HepG2 (cell line): ENCODE measurements at regions of chr6 and their contacts with region 1.

Region 1: DNA sequence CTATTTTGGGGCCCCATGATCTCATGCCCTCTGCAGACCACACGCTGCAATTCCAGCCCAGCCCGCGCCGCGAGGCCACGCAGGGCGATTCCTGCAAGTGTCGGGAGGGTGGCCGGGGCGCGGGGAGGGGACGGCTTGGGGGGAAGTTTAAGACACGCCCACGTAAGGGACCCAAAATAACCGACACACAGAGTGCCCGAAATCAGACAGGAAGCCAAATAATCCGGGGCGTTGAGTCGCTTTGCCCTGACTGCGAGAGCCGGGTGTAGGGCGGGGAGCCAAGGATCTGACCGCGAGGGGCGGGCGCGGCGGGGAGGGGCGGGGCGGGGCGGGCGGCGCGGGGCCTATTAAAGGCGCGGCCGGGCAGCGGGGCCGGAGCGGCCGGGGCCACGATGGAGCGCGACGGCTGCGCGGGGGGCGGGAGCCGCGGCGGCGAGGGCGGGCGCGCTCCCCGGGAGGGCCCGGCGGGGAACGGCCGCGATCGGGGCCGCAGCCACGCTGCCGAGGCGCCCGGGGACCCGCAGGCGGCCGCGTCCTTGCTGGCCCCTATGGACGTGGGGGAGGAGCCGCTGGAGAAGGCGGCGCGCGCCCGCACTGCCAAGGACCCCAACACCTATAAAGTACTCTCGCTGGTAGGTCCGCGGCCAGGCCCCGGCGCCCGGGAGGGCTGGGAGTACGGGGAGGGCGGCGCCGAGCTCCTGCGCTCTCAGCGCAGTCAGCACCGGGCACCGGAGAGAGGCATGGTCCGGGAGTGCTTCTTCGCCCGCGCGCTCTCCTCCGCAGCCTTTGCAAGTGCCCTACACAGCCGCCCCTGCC is at the start of gene ENPP1:
- DNase-seq: peak; percentile 71
- ATAC-seq: peak; percentile 93
- H3K4me3 ChIP-seq: peak within 1 kb of the TSS; percentile 71 to 94 (median 91)
- H3K27ac ChIP-seq: peak within 1 kb of the TSS; percentile 70
- H3K4me1 ChIP-seq: peaks cover 72% of the 10 kb centered on the region
- H3K27me3 ChIP-seq: no peaks in the 10 kb centered on the region; a peak in 1 of 5 replicates
- CTCF ChIP-seq: peak; percentile 83
- EP300 ChIP-seq: no peak
- POLR2A ChIP-seq: peak; percentile 43 to 84; a peak in 3 of 4 replicates
- RAD21 ChIP-seq: peak; percentile 71
- total RNA-seq, gene ENPP1: 45.8 and 56.5 TPM in 2 replicates

Region 2: GRCh38 chr6:131565056-131565455 is 242.8 kb before region 1 on chr6:
- CTCF ChIA-PET with region 1: no interaction called
- POLR2A ChIA-PET with region 1: no interaction called
- in situ Hi-C with region 1: no loop called
- intact Hi-C with region 1: no loop called
- DNase-seq: no peak
- ATAC-seq: no peak
- H3K4me3 ChIP-seq: no peak overlapping the region
- H3K27ac ChIP-seq: no peak overlapping the region
- H3K4me1 ChIP-seq: no peaks in the 10 kb centered on the region
- H3K27me3 ChIP-seq: no peaks in the 10 kb centered on the region
- CTCF ChIP-seq: no peak
- EP300 ChIP-seq: no peak
- POLR2A ChIP-seq: no peak
- RAD21 ChIP-seq: no peak

Region 3: DNA sequence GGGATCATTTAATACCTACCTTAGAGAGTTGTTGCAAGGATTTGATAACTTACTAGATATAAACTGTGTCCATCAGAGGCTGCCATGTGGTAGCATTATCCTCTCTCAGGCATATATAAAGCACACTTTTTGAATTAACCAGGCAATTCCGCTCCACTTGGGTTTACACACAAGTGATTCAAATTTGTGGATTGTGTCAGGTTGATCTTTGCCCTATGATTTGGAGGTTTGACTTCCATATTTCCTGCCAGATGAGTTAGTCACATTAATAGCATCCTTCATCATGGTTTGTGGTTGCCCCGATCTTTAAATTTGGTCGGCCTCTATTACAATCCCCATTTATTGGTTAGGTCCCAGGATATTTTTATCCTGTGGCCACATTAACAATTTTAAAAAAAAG is 52.3 kb before region 1 on chr6:
- CTCF ChIA-PET with region 1: no interaction called
- POLR2A ChIA-PET with region 1: interaction called, 5 read pairs
- in situ Hi-C with region 1: no loop called
- intact Hi-C with region 1: loop called (anchors 1 kb)
- DNase-seq: peak; percentile 69
- ATAC-seq: peak; percentile 11
- H3K4me3 ChIP-seq: peak overlapping the region in 1 of 3 experiments; percentile 8; a peak in 2 of 6 replicates
- H3K27ac ChIP-seq: peak overlapping the region; percentile 70
- H3K4me1 ChIP-seq: peaks cover 65% of the 10 kb centered on the region
- H3K27me3 ChIP-seq: no peaks in the 10 kb centered on the region
- CTCF ChIP-seq: no peak
- EP300 ChIP-seq: 0 out of 4 replicates have a peak, but pooled peaks of 1 of the 2 experiments have one; percentile 28
- POLR2A ChIP-seq: no peak
- RAD21 ChIP-seq: no peak

Region 4: DNA sequence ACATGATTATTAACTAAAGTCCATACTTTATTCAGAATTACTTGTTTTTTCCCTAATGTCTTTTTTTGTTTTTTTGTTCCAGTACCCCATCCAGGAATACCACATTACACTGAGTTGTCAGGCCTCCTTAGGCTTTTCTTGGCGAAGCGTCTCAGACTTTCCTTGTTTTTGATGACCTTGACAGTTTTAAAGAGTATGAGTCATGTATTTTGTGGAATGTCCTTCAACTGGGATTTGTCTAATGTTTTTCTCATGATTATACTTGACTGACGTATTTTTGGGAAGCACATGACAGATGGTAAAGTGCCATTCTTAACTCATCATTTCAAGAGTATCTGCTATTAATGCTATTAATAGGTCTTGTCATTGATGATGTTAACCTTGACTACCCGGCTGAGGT is 23.5 kb after region 1 on chr6:
- CTCF ChIA-PET with region 1: no interaction called
- POLR2A ChIA-PET with region 1: interaction called, 6 read pairs
- in situ Hi-C with region 1: no loop called
- intact Hi-C with region 1: loop called (anchors 2 kb)
- DNase-seq: no peak
- ATAC-seq: no peak
- H3K4me3 ChIP-seq: no peak overlapping the region
- H3K27ac ChIP-seq: no peak overlapping the region
- H3K4me1 ChIP-seq: peaks cover 54% of the 10 kb centered on the region
- H3K27me3 ChIP-seq: no peaks in the 10 kb centered on the region
- CTCF ChIP-seq: no peak
- EP300 ChIP-seq: no peak
- POLR2A ChIP-seq: no peak
- RAD21 ChIP-seq: no peak

Region 5: DNA sequence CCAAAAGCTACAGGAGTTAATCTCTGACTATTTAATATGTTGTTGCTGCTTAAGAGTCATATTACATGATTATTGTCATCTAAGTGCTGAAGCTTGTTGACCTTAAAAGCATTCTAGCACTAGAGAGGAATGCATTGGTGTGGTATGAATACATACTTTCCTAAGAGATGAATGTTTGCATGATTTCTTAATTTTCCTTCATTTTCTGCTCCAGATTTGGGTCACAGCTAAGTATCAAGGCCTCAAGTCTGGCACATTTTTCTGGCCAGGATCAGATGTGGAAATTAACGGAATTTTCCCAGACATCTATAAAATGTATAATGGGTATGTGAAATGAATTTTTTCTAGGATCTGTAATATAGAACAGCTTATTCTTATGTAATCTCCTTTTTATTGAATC is 53.5 kb after region 1 on chr6:
- CTCF ChIA-PET with region 1: no interaction called
- POLR2A ChIA-PET with region 1: interaction called, 3 read pairs
- in situ Hi-C with region 1: no loop called
- intact Hi-C with region 1: loop called (anchors 10 kb)
- DNase-seq: no peak
- ATAC-seq: no peak
- H3K4me3 ChIP-seq: no peak overlapping the region
- H3K27ac ChIP-seq: no peak overlapping the region
- H3K4me1 ChIP-seq: peaks cover 23% of the 10 kb centered on the region
- H3K27me3 ChIP-seq: no peaks in the 10 kb centered on the region
- CTCF ChIP-seq: no peak
- EP300 ChIP-seq: no peak
- POLR2A ChIP-seq: no peak
- RAD21 ChIP-seq: no peak

Region 6: GRCh38 chr6:131875647-131876046 is 67.8 kb after region 1 on chr6:
- CTCF ChIA-PET with region 1: no interaction called
- POLR2A ChIA-PET with region 1: no interaction called
- in situ Hi-C with region 1: no loop called
- intact Hi-C with region 1: no loop called
- DNase-seq: no peak
- ATAC-seq: no peak
- H3K4me3 ChIP-seq: no peak overlapping the region
- H3K27ac ChIP-seq: no peak overlapping the region
- H3K4me1 ChIP-seq: no peaks in the 10 kb centered on the region
- H3K27me3 ChIP-seq: no peaks in the 10 kb centered on the region
- CTCF ChIP-seq: no peak
- EP300 ChIP-seq: no peak
- POLR2A ChIP-seq: no peak
- RAD21 ChIP-seq: no peak